ENCODE measurements at regions of chr1 and their contacts with region 1.

Region 1: DNA sequence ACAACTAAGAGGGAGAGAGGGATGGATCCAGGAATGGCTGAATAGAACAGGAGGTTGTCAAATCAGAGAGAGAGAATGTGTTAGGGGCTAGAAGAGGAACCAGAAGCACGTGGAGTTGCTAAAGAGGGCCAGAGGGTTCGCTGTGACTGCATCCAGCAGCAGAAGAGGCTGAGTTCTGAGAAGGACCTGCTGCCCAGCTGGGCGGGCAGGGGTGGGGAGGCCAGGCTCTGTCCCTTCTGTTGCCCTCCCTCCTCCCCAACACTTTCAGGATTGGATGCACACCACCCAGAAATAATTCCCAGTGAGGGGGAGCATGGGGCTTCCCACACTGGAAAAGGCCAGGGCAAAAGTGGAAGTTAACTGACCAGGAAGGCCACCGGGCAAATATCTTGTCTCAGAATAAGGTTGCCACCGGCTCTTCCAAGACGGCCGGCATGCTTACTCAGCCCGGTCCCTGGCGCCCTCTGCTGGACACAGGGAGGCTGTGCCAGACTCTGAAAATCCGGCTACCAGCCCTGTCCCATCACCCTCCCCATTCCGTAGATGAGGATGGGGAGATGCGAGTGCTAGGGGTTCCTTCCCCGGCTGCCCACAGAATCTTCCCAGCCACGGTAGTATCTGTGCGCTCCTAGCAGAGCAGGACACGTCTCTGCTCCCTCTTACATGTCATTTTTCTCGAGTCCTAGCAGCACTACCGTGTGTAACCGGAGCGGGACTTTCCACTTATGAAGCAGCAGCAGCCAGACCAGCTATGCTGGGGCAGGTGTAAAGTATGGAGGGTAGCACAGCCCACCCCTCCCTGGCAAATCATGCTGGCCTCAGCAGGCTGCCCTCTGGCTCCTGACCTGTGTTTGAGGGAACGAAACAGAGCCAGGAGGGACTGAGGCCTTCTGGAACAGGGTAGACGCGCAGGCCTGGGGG is 46.8 kb upstream of the A3GALT2 start:
- DNase-seq: peak; percentile 50
- ATAC-seq: peak; percentile 78
- H3K4me3 ChIP-seq: no peak overlapping the region
- H3K27ac ChIP-seq: no peak overlapping the region
- H3K4me1 ChIP-seq: peaks cover 51% of the 10 kb centered on the region
- H3K27me3 ChIP-seq: peaks cover 0 to 16% of the 10 kb centered on the region in 2 experiments; a peak in 3 of 5 replicates
- CTCF ChIP-seq: peak; percentile 95
- EP300 ChIP-seq: no peak
- POLR2A ChIP-seq: no peak
- RAD21 ChIP-seq: peak; percentile 94

Region 2: GRCh38 chr1:33111970-33112369 is 255.8 kb before region 1 on chr1:
- CTCF ChIA-PET with region 1: no interaction called
- POLR2A ChIA-PET with region 1: no interaction called
- in situ Hi-C with region 1: no loop called
- intact Hi-C with region 1: loop called (anchors 10 kb)
- DNase-seq: peak; percentile 16
- ATAC-seq: no peak
- H3K4me3 ChIP-seq: no peak overlapping the region
- H3K27ac ChIP-seq: no peak overlapping the region
- H3K4me1 ChIP-seq: peaks cover under 1% of the 10 kb centered on the region; the same call in 1 of the 2 replicates
- H3K27me3 ChIP-seq: no peaks in the 10 kb centered on the region
- CTCF ChIP-seq: peak; percentile 48; the same call in 1 of the 2 replicates
- EP300 ChIP-seq: no peak
- POLR2A ChIP-seq: no peak
- RAD21 ChIP-seq: no peak

Region 3: DNA sequence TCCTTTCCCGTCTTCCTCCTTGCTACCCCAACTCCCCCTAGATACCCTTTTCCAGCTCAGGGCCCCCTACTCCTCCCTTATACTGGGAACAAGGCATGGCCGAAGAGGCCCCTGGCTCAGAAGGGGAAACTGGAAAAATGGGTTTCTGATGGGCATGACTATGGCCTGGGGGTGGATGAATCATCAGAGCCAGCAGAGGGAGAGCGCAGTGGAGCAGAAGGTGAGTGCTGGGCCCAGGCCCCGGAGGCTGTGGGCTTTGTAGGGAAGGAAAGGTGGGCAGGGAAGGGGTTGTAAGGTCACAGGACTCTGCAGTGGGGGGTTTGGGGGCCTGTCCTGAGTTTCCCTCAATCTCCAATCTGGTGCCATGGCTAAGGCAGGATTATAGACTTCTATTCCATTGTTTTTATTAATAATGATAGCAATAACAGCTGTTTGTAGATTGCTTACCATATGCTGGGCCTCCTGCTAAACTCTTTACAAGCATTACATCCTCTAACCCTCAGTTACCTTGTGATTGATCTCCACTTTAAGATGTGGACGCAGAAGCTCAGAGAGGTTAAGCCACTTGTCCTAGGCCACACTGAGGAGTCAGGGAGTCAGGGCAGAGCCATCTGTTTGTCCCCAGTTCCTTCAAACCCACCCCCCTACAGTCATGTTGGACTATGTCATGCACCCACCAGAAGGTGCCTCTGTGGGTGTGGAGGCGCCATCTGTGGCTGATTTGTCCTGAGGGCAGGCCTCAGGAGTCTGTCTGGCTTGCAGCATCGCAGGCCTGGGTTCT is 147.7 kb before region 1 on chr1:
- CTCF ChIA-PET with region 1: interaction called, 10 read pairs
- POLR2A ChIA-PET with region 1: no interaction called
- in situ Hi-C with region 1: loop called (anchors 5 kb)
- intact Hi-C with region 1: loop called (anchors 2 kb)
- DNase-seq: no peak
- ATAC-seq: peak; percentile 78
- H3K4me3 ChIP-seq: no peak overlapping the region
- H3K27ac ChIP-seq: no peak overlapping the region
- H3K4me1 ChIP-seq: peaks cover 30% of the 10 kb centered on the region; the same call in 1 of the 2 replicates
- H3K27me3 ChIP-seq: peaks cover 0 to 4% of the 10 kb centered on the region in 2 experiments; a peak in 1 of 5 replicates
- CTCF ChIP-seq: peak; percentile 42
- EP300 ChIP-seq: no peak
- POLR2A ChIP-seq: no peak
- RAD21 ChIP-seq: no peak

Region 4: DNA sequence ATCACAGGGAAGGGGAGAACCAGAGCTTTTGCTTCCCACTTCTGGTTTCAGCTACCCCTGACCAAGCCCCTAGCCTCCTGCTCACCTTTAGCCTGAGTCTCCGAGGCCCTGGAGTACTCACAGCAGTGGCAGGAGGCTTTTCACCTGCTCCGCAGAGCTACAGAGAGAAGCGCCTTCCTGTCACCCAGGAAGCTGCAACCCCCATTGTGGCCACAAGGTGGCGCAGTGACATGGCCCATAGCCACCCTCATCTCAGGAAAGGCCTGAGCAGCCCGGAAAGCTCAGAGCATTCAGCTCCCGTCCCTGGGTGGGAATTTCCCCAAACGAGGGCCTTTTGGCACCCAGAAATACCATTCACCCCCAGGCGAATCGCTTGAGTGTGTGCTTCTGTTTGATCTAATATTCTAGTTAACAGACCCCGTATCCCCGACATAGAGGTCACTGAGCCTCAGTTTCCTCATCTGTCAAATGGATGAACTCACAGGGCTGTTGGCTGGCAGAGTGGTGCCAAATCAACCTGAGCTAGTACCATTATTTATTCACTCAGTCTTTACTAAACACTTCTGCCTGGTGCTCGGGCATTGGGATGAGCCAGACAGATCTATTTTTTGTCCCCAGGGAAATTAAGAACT is 72.2 kb before region 1 on chr1:
- CTCF ChIA-PET with region 1: interaction called, 34 read pairs
- POLR2A ChIA-PET with region 1: interaction called, 10 read pairs
- in situ Hi-C with region 1: loop called (anchors 5 kb)
- intact Hi-C with region 1: loop called (anchors 1 kb)
- DNase-seq: peak; percentile 62
- ATAC-seq: peak; percentile 88
- H3K4me3 ChIP-seq: no peak overlapping the region
- H3K27ac ChIP-seq: no peak overlapping the region
- H3K4me1 ChIP-seq: 0 out of 2 replicates have a peak, but pooled peaks cover 1% of the 10 kb centered on the region
- H3K27me3 ChIP-seq: no peaks in the 10 kb centered on the region
- CTCF ChIP-seq: peak; percentile 96
- EP300 ChIP-seq: no peak
- POLR2A ChIP-seq: no peak
- RAD21 ChIP-seq: peak; percentile 89

Region 5: GRCh38 chr1:33342041-33342723 is 25.6 kb before region 1 on chr1:
- CTCF ChIA-PET with region 1: no interaction called
- POLR2A ChIA-PET with region 1: interaction called, 15 read pairs
- in situ Hi-C with region 1: no loop called
- intact Hi-C with region 1: no loop called
- DNase-seq: peak; percentile 97
- ATAC-seq: peak; percentile 90
- H3K4me3 ChIP-seq: peak overlapping the region in 2 of 3 experiments; percentile 18 to 57; a peak in 3 of 6 replicates
- H3K27ac ChIP-seq: peak overlapping the region; percentile 61
- H3K4me1 ChIP-seq: peaks cover 100% of the 10 kb centered on the region
- H3K27me3 ChIP-seq: no peaks in the 10 kb centered on the region
- CTCF ChIP-seq: peak; percentile 43
- EP300 ChIP-seq: peak; percentile 28 to 86; a peak in 2 of 4 replicates
- POLR2A ChIP-seq: peak; percentile 13 to 60; a peak in 2 of 4 replicates
- RAD21 ChIP-seq: peak; percentile 58

Region 6: GRCh38 chr1:33349778-33350610 is 17.8 kb before region 1 on chr1:
- CTCF ChIA-PET with region 1: no interaction called
- POLR2A ChIA-PET with region 1: interaction called, 13 read pairs
- in situ Hi-C with region 1: no loop called
- intact Hi-C with region 1: no loop called
- DNase-seq: peak; percentile 62
- ATAC-seq: peak; percentile 78
- H3K4me3 ChIP-seq: peak overlapping the region; percentile 60 to 88 (median 88)
- H3K27ac ChIP-seq: peak overlapping the region; percentile 69
- H3K4me1 ChIP-seq: peaks cover 67% of the 10 kb centered on the region
- H3K27me3 ChIP-seq: no peaks in the 10 kb centered on the region; a peak in 1 of 5 replicates
- CTCF ChIP-seq: peak; percentile 29
- EP300 ChIP-seq: no peak
- POLR2A ChIP-seq: peak; percentile 77 to 92
- RAD21 ChIP-seq: peak; percentile 31; the same call in 1 of the 2 replicates

Region 7: GRCh38 chr1:33410091-33410701 is 42.5 kb after region 1 on chr1:
- CTCF ChIA-PET with region 1: no interaction called
- POLR2A ChIA-PET with region 1: no interaction called
- in situ Hi-C with region 1: no loop called
- intact Hi-C with region 1: no loop called
- DNase-seq: no peak
- ATAC-seq: no peak
- H3K4me3 ChIP-seq: no peak overlapping the region
- H3K27ac ChIP-seq: no peak overlapping the region
- H3K4me1 ChIP-seq: no peaks in the 10 kb centered on the region
- H3K27me3 ChIP-seq: no peaks in the 10 kb centered on the region
- CTCF ChIP-seq: no peak
- EP300 ChIP-seq: no peak
- POLR2A ChIP-seq: no peak
- RAD21 ChIP-seq: no peak

Measured in HepG2 (cell line).